ENCODE measurements at regions of chr20 and their contacts with region 1.

Region 1: DNA sequence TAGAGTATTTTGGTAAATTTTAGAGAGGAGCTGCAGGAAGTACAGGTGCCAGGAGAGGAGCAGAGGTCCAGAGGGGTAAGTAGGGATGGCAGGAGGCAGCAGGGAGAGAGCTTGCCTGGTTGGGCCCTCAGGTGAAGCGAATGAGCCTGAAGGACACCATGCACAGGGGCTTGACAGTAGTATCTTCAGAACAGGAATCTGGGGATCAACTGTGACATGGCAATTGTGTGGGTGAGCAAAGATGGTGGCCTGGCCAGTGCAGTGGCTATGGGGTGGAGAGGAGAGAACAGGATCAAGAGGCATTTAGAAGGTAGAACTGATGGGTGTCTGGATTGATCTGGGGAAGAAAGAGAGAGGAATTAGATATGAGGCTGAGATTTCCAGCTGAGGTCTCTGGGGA is 68.7 kb upstream of the RNF24 start:
- DNase-seq: no peak
- H3K4me3 ChIP-seq: no peak overlapping the region
- H3K27ac ChIP-seq: no peak overlapping the region
- H3K4me1 ChIP-seq: peaks cover 12% of the 10 kb centered on the region
- CTCF ChIP-seq: no peak

Region 2: DNA sequence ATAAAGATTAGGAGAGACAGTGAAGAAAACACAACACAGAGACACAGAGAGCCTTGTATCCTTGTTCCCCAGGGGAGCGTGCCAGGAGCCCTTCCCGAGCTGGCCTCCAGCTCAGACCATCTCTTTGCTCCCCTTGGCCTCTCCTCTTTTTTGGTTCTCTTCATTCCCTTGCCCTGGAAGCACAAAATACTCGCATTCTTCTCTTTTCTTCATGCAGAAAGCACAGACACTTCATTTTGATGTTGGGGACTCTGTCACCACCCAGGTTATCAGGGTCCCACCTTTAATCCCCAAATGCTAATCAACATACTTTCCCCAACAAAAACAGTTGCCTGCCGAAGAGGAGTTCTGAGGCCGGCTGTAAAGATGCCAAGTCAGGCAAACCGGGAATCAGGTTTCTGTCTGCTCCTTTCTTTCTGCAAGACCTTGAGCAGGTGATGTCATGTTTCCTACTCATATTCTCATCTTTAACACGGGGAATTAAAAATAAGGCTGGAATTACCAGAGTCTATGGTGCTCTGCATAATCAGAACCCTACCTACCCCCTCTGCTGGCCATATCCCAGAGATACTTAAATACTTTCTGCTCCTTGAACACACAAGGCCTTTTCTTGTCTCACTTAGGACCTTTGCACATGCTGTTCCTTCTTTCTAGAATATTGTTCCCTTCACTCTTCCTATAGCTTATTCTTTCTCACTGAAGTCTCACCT is 1681.7 kb before region 1 on chr20:
- CTCF ChIA-PET with region 1: no interaction called
- POLR2A ChIA-PET with region 1: no interaction called
- intact Hi-C with region 1: no loop called
- DNase-seq: no peak
- H3K4me3 ChIP-seq: no peak overlapping the region
- H3K27ac ChIP-seq: no peak overlapping the region
- H3K4me1 ChIP-seq: no peaks in the 10 kb centered on the region
- CTCF ChIP-seq: peak; percentile 59

Region 3: GRCh38 chr20:3679749-3680700 is 404.1 kb before region 1 on chr20:
- CTCF ChIA-PET with region 1: no interaction called
- POLR2A ChIA-PET with region 1: no interaction called
- intact Hi-C with region 1: loop called (anchors 1 kb)
- DNase-seq: no peak
- H3K4me3 ChIP-seq: no peak overlapping the region
- H3K27ac ChIP-seq: no peak overlapping the region
- H3K4me1 ChIP-seq: no peaks in the 10 kb centered on the region
- CTCF ChIP-seq: no peak

Region 4: GRCh38 chr20:3716195-3716834 is 367.8 kb before region 1 on chr20:
- CTCF ChIA-PET with region 1: no interaction called
- POLR2A ChIA-PET with region 1: no interaction called
- intact Hi-C with region 1: loop called (anchors 2 kb)
- DNase-seq: peak; percentile 74
- H3K4me3 ChIP-seq: no peak overlapping the region
- H3K27ac ChIP-seq: no peak overlapping the region
- H3K4me1 ChIP-seq: peaks cover 13% of the 10 kb centered on the region
- CTCF ChIP-seq: peak; percentile 87

Region 5: DNA sequence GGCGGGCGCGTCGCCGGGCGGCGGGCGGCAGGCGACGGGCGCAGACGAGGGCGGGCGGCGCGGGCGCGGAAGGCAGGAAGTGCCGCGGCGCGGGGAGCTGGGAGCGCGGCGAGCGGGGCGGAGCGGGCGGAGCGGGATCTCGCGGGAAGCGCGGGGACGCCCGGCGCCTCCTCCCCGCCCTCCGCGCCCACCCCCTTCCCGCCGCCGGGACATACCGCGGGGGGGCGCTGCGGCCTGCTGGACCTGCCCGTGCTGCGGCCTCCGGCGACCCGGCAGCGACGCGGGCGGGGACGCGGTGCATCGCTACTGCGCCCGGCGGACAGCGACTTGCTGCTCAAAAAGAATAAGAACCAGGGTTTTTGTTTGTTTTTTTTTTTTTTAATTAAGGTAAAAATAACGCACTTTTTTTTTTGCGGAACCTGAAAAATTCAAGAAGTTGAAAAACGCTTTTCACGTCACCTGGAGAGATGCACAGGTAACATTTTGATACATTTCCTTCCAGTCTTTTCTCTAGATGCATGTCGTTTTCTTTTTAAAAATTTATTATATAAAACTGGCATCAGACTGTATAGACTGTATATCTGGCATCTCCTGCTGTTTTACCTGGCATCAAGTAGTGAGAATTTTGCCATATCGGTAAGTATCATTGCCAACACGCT is 297.3 kb before region 1 on chr20 and contains the start of gene CENPB:
- CTCF ChIA-PET with region 1: no interaction called
- POLR2A ChIA-PET with region 1: no interaction called
- intact Hi-C with region 1: loop called (anchors 2 kb)
- DNase-seq: peak; percentile 90
- H3K4me3 ChIP-seq: peak within 1 kb of the TSS; percentile 71
- H3K27ac ChIP-seq: no peak within 1 kb of the TSS
- H3K4me1 ChIP-seq: peaks cover 28% of the 10 kb centered on the region
- CTCF ChIP-seq: peak; percentile 80
- total RNA-seq, gene CENPB: 32.5 and 39.1 TPM in 2 replicates

Region 6: GRCh38 chr20:3888622-3889488 is 195.2 kb before region 1 on chr20 and contains the start of gene PANK2:
- CTCF ChIA-PET with region 1: no interaction called
- POLR2A ChIA-PET with region 1: no interaction called
- intact Hi-C with region 1: loop called (anchors 1 kb)
- DNase-seq: peak; percentile 98
- H3K4me3 ChIP-seq: peak within 1 kb of the TSS; percentile 95
- H3K27ac ChIP-seq: peak within 1 kb of the TSS; percentile 81
- H3K4me1 ChIP-seq: peaks cover 32% of the 10 kb centered on the region
- CTCF ChIP-seq: peak; percentile 47
- total RNA-seq, gene PANK2: 40.9 and 46.1 TPM in 2 replicates

Region 7: DNA sequence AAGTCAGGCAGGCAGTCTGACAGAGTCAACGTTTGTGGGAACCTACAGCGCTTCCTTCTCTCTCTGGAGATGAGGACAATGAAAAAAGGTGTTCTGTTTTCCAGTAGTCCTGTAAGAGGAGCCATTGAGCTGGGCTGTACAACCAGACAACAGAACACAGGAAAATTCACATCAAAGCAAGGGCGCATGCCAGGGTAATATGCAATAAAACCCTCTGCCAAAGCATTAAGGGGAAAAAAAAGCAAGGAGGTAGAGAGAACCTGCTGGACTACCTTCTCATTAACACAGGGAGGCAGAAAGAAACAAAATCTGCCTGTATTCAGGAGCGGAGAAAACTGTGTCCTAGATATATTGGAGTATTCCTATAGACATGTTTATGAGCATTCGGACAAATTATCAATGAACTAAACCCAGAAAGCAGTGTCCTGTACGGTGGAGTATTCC is 70.0 kb before region 1 on chr20:
- CTCF ChIA-PET with region 1: no interaction called
- POLR2A ChIA-PET with region 1: interaction called, 6 read pairs
- intact Hi-C with region 1: loop called (anchors 1 kb)
- DNase-seq: peak; percentile 48
- H3K4me3 ChIP-seq: no peak overlapping the region
- H3K27ac ChIP-seq: no peak overlapping the region
- H3K4me1 ChIP-seq: peaks cover 20% of the 10 kb centered on the region
- CTCF ChIP-seq: peak; percentile 71

Region 8: DNA sequence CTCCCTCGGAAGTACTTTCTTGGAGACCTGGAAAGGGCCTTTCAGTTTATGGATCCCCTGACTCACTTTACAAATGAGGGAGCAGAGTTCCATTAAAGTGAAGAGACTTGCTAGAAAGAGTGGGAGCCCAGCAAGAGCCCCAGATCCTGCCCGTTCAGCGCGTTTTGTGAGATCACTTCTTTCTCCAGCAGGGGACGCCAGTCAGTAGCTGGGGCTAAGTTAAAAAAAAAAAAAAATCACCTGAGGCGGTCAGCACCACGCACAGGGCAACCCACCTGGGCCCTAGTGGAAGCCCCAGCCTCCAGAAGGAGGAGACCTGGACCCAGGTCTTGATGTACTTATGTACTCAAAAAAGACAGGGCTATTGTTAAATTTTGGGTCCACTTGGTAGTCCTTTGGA is 205.8 kb after region 1 on chr20:
- CTCF ChIA-PET with region 1: no interaction called
- POLR2A ChIA-PET with region 1: no interaction called
- intact Hi-C with region 1: no loop called
- DNase-seq: no peak
- H3K4me3 ChIP-seq: no peak overlapping the region
- H3K27ac ChIP-seq: no peak overlapping the region
- H3K4me1 ChIP-seq: no peaks in the 10 kb centered on the region
- CTCF ChIP-seq: peak; percentile 39; the same call in 1 of the 2 replicates

Measured in OCI-LY7 (cell line).